AG04450 (cell line): ENCODE measurements at regions of chr1 and their contacts with region 1.

Region 1: GRCh38 chr1:77910116-77910515 is 21.7 kb downstream of the NEXN start:
- DNase-seq: no peak
- H3K4me3 ChIP-seq: no peak overlapping the region
- H3K27ac ChIP-seq: no peak overlapping the region
- H3K27me3 ChIP-seq: no peaks in the 10 kb centered on the region
- CTCF ChIP-seq: no peak

Region 2: GRCh38 chr1:77927414-77927813 is 17.3 kb after region 1 on chr1:
- CTCF ChIA-PET with region 1: no interaction called
- POLR2A ChIA-PET with region 1: no interaction called
- DNase-seq: no peak
- H3K4me3 ChIP-seq: no peak overlapping the region
- H3K27ac ChIP-seq: no peak overlapping the region
- H3K27me3 ChIP-seq: no peaks in the 10 kb centered on the region
- CTCF ChIP-seq: no peak

Region 3: DNA sequence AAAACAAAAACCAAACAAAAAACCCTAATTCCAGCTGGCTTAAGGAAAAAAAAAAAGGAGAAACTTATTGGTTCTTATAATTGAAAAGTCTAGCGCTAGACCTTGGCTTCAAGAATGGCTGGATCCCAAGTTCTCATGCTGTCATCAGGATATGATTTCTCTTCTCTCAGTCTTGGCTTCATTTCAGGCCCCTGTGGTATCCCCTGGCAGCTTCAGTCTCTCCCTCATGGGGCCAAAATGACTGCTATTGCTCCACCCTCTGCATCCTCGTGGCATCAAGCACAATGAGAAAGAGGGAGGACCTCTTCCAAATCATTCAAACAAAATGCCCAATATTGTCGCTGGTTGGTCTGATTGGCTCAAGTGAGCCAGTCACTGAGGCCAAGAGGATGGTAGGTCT is 216.4 kb after region 1 on chr1:
- CTCF ChIA-PET with region 1: no interaction called
- POLR2A ChIA-PET with region 1: interaction called, 12 read pairs
- DNase-seq: no peak
- H3K4me3 ChIP-seq: no peak overlapping the region
- H3K27ac ChIP-seq: no peak overlapping the region
- H3K27me3 ChIP-seq: no peaks in the 10 kb centered on the region
- CTCF ChIP-seq: no peak